Prostate gland (tissue), 2 donors: ENCODE measurements at regions of chr17 and their contacts with region 1.

Region 1: DNA sequence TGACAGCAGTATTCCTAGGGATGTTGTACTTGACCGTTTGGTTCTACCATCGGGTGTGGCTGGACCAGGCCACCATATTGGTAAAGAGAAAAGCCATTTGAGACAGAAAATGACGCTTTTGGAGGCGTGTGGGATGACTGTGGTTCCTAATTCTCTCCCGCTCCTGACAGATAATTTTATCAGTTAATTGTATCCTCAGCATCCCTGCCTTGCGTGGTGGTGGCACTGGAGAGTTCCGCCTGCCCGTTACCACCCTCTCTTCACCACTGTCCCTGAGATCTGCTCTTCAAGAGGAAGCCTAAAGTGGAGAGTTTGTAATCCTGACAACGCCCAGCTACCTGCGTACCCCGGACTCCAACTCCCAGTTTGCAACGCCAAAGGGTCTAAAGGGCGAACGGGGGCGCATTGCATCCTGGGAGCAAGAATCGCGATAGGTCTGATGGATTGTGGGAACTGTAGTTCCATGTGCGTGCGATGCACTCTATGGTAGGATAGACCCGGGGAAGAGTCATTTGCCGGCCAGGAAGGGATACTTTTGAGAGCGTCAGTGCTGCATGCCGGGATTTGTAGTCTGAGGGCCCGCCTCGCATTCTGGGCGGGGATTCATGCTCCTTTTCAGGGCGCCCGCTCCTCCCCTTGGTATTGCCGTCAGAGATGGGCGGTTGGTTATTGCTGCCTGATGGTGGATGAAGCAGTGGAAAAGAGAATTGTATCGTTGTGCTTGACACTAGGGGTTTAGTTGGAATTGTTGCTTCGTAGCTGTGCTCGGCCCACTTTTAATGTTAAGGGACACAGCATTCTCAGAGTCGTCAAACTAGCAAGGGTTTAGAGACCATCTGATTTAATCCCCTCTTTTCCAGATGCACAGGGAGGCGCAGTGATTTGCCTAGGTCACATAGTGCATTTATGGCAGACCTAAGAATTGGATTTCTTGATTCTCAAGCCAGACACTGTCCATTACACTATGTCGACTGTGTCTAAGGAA is 965 bp upstream of the PHF12 start:
- DNase-seq: peak; percentile 98
- H3K4me3 ChIP-seq: peak overlapping the region; percentile 52 to 61
- H3K27ac ChIP-seq: peak overlapping the region; percentile 98 to 99
- H3K4me1 ChIP-seq: peaks cover 4% of the 10 kb centered on the region
- H3K27me3 ChIP-seq: no peaks in the 10 kb centered on the region
- CTCF ChIP-seq: peak in 2 of 4 experiments; percentile 7 to 14
- POLR2A ChIP-seq: peak; percentile 58

Region 2: DNA sequence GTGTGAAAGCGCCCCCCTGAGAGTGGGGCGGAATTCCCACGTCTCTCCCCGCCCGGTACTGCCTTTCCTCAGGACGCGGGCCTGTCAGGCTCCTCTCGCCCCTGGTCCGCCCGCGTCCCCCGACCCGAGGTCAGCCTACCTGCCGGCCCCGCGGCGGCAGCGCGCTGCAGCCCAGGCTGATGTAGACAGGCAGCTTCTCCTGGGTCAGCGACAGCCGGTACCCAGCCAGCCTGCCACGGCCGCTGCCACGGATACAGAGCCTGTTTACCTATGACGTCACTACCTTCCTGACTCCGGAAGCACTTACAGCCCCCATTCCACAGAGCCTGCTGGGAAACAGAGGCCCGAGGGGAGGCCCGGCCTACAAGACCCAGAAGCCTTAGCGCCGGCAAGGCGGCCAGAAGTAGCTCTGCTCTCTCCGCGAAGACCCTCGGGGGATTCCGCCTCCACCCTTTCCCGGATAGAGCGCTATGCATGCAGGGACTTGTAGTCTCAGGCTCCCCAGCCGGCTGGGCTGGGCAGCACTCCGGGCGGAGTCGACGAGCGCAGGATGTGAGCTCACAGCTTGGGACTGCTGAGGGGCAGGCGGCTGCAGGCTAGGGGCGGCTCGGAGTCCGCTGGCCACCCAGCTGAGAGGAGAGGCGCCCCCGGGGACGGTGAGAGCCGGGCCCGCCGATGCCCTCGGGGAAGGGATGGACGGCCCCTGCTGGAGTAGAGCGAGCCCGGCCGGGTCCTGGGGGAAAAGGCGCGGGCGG is 616.9 kb before region 1 on chr17 and contains the starts of genes IFT20 and TNFAIP1:
- intact Hi-C with region 1: loop called (anchors 5 kb)
- DNase-seq: peak; percentile 99
- H3K4me3 ChIP-seq: peak within 1 kb of the TSS; percentile 88 to 94
- H3K27ac ChIP-seq: peak within 1 kb of the TSS; percentile 87 to 88
- H3K4me1 ChIP-seq: peaks cover 12% of the 10 kb centered on the region
- H3K27me3 ChIP-seq: no peaks in the 10 kb centered on the region
- CTCF ChIP-seq: peak in 1 of 4 experiments; percentile 24
- POLR2A ChIP-seq: peak; percentile 95
- total RNA-seq, gene IFT20: 45.2 to 55.0 TPM
- total RNA-seq, gene TNFAIP1: 32.2 to 63.1 TPM

Region 3: GRCh38 chr17:28896884-28897768 is 55.2 kb before region 1 on chr17 and contains the start of gene FLOT2:
- intact Hi-C with region 1: loop called (anchors 5 kb)
- DNase-seq: peak; percentile 91
- H3K4me3 ChIP-seq: peak within 1 kb of the TSS; percentile 95 to 97
- H3K27ac ChIP-seq: peak within 1 kb of the TSS; percentile 96 to 97
- H3K4me1 ChIP-seq: peaks cover 20% of the 10 kb centered on the region
- H3K27me3 ChIP-seq: no peaks in the 10 kb centered on the region
- CTCF ChIP-seq: peak in 1 of 4 experiments; percentile 37
- POLR2A ChIP-seq: peak; percentile 47
- total RNA-seq, gene FLOT2: 82.9 to 121 TPM